Sigmoid colon (tissue), 7 donors: ENCODE measurements at regions of chr6 and their contacts with region 1.

Region 1: GRCh38 chr6:53651764-53652401 is 13.7 kb downstream of the KLHL31 start:
- DNase-seq: peak; percentile 82
- H3K4me3 ChIP-seq: peak overlapping the region; percentile 42 to 65 (median 57)
- H3K27ac ChIP-seq: peak overlapping the region in 3 of 4 donors; percentile 15 to 56 (median 41)
- H3K4me1 ChIP-seq: peaks cover 0 to 20% (median 8%) of the 10 kb centered on the region in 4 donors
- H3K27me3 ChIP-seq: no peaks in the 10 kb centered on the region
- CTCF ChIP-seq: peak in 2 of 4 experiments; percentile 14 to 22
- EP300 ChIP-seq: no peak
- POLR2A ChIP-seq: no peak

Region 2: GRCh38 chr6:53492860-53493634 is 158.8 kb before region 1 on chr6:
- intact Hi-C with region 1: loop called (anchors 1 kb)
- DNase-seq: no peak
- H3K4me3 ChIP-seq: peak overlapping the region in 3 of 4 donors; percentile 12 to 20 (median 12)
- H3K27ac ChIP-seq: peak overlapping the region in 2 of 4 donors; percentile 32 to 52
- H3K4me1 ChIP-seq: peaks cover 0 to 39% (median 25%) of the 10 kb centered on the region in 4 donors
- H3K27me3 ChIP-seq: no peaks in the 10 kb centered on the region
- CTCF ChIP-seq: peak; percentile 50 to 72 (median 65)
- EP300 ChIP-seq: no peak
- POLR2A ChIP-seq: no peak

Region 3: DNA sequence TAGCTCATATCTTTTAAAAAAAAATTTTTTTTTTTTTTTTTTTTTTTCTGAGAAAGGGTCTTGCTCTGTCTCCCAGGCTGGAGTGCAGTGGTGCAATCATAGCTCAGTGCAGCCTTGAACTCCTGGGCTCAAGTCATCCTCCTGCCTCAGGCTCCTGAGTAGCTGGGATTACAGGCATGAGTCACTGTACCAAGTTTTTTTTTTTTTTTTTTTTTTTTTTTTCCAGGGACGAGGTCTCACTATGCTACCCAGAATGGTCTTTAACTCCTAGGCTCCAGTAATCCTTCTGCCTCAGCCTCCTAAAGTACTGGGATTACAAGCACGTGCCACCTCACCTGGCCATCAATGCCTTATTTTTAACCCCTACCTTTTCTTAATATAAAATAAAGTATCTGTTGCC is 134.8 kb before region 1 on chr6:
- intact Hi-C with region 1: loop called (anchors 5 kb)
- DNase-seq: no peak
- H3K4me3 ChIP-seq: no peak overlapping the region
- H3K27ac ChIP-seq: no peak overlapping the region
- H3K4me1 ChIP-seq: peaks cover 0 to 46% (median 23%) of the 10 kb centered on the region in 4 donors
- H3K27me3 ChIP-seq: no peaks in the 10 kb centered on the region
- CTCF ChIP-seq: no peak
- EP300 ChIP-seq: no peak
- POLR2A ChIP-seq: no peak

Region 4: DNA sequence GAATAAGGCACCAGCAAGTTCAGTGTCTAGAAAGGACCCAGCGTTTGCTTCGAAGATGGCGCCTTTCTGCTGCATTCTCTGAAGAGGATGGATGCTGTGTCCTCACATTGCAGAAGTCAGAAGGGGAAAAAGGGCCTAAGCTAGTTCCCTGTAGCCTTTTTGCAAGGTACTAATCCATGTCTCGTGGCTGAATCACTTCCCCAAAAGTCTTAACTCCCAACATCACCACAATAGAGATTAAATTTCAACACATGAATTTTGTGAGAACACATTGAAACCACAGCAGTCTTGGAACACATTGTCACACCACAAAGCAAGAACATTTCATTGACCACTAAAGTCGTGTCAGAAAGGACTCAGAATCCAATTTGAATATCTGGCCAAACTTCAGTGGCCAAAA is 28.4 kb before region 1 on chr6:
- intact Hi-C with region 1: no loop called
- DNase-seq: no peak
- H3K4me3 ChIP-seq: no peak overlapping the region
- H3K27ac ChIP-seq: no peak overlapping the region
- H3K4me1 ChIP-seq: peaks cover 0 to 12% (median 9%) of the 10 kb centered on the region in 4 donors
- H3K27me3 ChIP-seq: no peaks in the 10 kb centered on the region
- CTCF ChIP-seq: no peak
- EP300 ChIP-seq: no peak
- POLR2A ChIP-seq: no peak

Region 5: GRCh38 chr6:53725791-53726431 is 74.0 kb after region 1 on chr6:
- intact Hi-C with region 1: loop called (anchors 2 kb)
- DNase-seq: peak; percentile 86
- H3K4me3 ChIP-seq: no peak overlapping the region
- H3K27ac ChIP-seq: no peak overlapping the region
- H3K4me1 ChIP-seq: peaks cover 0 to 3% (median 0%) of the 10 kb centered on the region in 4 donors
- H3K27me3 ChIP-seq: no peaks in the 10 kb centered on the region
- CTCF ChIP-seq: peak; percentile 69 to 95 (median 84)
- EP300 ChIP-seq: no peak
- POLR2A ChIP-seq: no peak